Dorsolateral prefrontal cortex (tissue), 120 donors: ENCODE measurements at regions of chr4 and their contacts with region 1.

Region 1: GRCh38 chr4:6546681-6547447 is 28.1 kb upstream of the MAN2B2 start:
- DNase-seq: peak in 5 of 10 donors; percentile 49 to 70 (median 63)
- H3K4me3 ChIP-seq: peak overlapping the region in 3 of 59 donors; percentile 3 to 30 (median 26)
- H3K27ac ChIP-seq: peak overlapping the region in 52 of 59 donors; percentile 8 to 88 (median 69)
- H3K27me3 ChIP-seq: peaks cover 0 to 14% (median 0%) of the 10 kb centered on the region in 45 donors
- CTCF ChIP-seq: peak; percentile 78 to 96 (median 92)

Region 2: GRCh38 chr4:6250235-6250983 is 296.5 kb before region 1 on chr4:
- intact Hi-C with region 1: loop called (anchors 5 to 10 kb)
- DNase-seq: peak in 1 of 10 donors; percentile 37
- H3K4me3 ChIP-seq: peak overlapping the region in 26 of 59 donors; percentile 3 to 44 (median 21)
- H3K27ac ChIP-seq: peak overlapping the region in 7 of 59 donors; percentile 12 to 65 (median 27)
- H3K27me3 ChIP-seq: no peaks in the 10 kb centered on the region
- CTCF ChIP-seq: peak; percentile 77 to 96 (median 88)

Region 3: DNA sequence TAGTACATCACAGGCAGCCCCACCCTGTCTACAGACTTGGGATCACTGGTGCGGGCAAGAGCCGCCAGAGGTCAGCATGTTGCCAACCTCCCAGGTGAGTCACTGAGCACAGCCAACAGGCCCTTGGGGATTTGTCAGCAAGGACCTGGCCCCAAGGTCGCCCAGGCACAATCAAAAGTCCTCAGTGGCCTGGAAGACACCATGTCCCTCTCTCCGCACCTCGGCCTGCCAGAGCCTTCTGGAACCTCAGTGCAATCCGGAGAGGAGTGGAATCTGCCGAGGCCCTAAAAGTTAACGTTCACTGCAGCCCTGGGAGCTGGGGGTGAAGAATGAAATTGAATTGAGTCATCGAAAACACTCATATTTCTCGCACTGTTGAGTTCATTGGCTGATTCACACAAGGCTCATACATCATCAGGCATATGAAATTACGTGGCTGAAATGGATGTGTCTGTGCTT is 202.9 kb before region 1 on chr4:
- intact Hi-C with region 1: no loop called
- DNase-seq: peak in 2 of 10 donors; percentile 42 to 48
- H3K4me3 ChIP-seq: no peak overlapping the region
- H3K27ac ChIP-seq: peak overlapping the region in 50 of 59 donors; percentile 7 to 92 (median 76)
- H3K27me3 ChIP-seq: no peaks in the 10 kb centered on the region
- CTCF ChIP-seq: no peak

Region 4: DNA sequence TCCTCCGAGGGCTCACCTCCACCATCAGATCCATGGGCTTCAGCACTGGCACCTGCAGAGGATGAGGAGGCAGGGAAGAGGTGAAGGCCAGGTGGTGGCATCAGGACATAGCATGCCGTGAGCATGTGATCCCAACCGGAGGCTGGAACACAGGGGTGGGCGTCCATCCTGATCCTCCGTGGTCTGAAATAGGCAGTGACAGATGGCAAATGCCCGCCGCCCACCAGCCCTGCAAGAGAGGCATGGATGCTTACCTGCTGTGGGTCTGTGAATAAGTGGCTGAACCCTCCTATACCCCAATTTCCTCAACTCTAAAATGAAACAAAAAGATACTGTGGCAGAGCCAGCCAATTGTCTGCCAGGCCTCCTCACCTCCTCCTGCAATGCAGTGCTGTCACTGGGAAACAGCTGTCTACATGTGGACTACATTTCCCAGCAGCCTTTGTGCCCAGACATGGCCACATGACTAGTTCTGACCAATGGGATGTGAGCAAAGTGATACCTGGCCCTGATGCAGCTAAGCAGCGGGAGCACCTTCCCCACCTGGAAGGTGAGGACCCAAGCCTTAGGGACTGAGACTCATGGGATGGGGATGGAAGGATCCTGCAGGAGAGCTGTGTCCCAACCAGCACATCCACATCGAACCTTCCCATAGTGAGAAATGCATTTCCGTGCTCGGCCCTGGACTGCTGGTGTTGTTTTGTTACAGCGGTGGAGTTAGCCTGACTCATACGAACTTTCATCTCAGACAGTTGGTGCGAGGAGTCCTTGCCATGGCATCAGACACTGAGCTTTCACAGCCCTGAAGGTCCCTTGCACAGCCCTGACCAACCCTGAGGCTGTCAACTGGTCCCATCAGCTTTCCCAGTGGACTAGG is 174.0 kb before region 1 on chr4:
- intact Hi-C with region 1: loop called in 1 of 2 experiments (anchors 10 kb)
- DNase-seq: peak in 5 of 10 donors; percentile 47 to 75 (median 63)
- H3K4me3 ChIP-seq: no peak overlapping the region
- H3K27ac ChIP-seq: peak overlapping the region in 32 of 59 donors; percentile 2 to 73 (median 48)
- H3K27me3 ChIP-seq: no peaks in the 10 kb centered on the region
- CTCF ChIP-seq: no peak

Region 5: DNA sequence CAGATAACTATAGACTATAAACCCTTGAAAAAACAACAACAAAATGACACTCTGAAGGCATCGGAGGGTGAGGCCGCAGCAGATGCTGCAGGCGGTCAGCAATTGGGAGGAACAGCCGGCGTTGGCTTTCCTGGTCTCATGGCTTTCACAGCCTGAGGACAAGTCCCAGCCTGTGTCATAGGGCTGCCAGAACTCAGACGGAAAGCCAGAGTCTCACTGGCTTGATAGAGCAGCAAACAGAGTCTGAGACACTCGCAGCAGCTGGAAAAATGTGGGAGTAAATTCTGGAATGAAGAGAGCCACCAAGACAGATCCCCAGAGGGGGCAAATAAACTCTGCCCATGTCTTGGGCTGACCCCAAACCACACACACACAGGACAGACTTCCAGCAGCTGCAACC is 160.8 kb before region 1 on chr4:
- intact Hi-C with region 1: loop called in 1 of 2 experiments (anchors 5 kb)
- DNase-seq: no peak
- H3K4me3 ChIP-seq: no peak overlapping the region
- H3K27ac ChIP-seq: peak overlapping the region in 33 of 59 donors; percentile 0 to 80 (median 44)
- H3K27me3 ChIP-seq: no peaks in the 10 kb centered on the region
- CTCF ChIP-seq: peak in 1 of 56 donors; percentile 1

Region 6: GRCh38 chr4:6509587-6509986 is 37.3 kb before region 1 on chr4:
- intact Hi-C with region 1: no loop called
- DNase-seq: peak in 1 of 10 donors; percentile 8
- H3K4me3 ChIP-seq: no peak overlapping the region
- H3K27ac ChIP-seq: peak overlapping the region in 1 of 59 donors; percentile 4
- H3K27me3 ChIP-seq: no peaks in the 10 kb centered on the region
- CTCF ChIP-seq: no peak

Region 7: DNA sequence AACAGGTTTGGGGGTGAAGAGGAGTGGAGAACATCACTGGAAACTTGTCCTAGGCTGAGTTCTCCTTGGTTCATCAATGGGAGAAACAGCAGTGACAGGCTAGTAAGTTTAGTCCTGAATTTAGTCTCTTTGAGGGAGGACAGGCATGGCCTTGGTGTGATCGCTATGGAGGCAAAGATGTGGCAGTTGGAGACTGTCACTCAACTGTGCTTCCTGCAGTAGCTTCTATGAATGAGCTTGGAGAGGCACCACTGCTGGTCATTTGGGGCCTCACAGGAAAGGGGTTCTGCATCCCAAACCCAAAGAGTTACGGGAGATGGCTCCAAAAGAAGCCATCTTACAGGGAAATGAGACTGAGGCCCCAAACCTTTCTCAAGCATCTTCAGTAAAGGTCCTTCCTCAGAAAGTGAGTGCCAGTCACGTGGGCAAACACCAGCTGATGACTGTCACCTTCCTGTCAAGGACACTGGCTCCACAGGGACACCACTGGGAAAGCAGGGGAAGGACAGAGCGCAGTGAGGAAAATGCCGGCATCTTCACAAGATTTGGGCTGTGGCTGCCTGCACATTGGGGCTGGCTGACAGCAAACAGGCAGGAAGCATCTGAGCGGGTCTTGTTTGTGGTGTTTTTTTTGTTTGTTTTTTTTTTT is 100.8 kb after region 1 on chr4:
- intact Hi-C with region 1: no loop called
- DNase-seq: no peak
- H3K4me3 ChIP-seq: no peak overlapping the region
- H3K27ac ChIP-seq: peak overlapping the region in 16 of 59 donors; percentile 1 to 63 (median 27)
- H3K27me3 ChIP-seq: no peaks in the 10 kb centered on the region
- CTCF ChIP-seq: no peak